OCI-LY7 (cell line): ENCODE measurements at regions of chr3 and their contacts with region 1.

Region 1: GRCh38 chr3:46953234-46954010 is 23.1 kb downstream of the CCDC12 start:
- DNase-seq: peak; percentile 62
- H3K4me3 ChIP-seq: peak overlapping the region; percentile 49
- H3K27ac ChIP-seq: peak overlapping the region; percentile 77
- H3K4me1 ChIP-seq: peaks cover 97% of the 10 kb centered on the region
- CTCF ChIP-seq: no peak

Region 2: DNA sequence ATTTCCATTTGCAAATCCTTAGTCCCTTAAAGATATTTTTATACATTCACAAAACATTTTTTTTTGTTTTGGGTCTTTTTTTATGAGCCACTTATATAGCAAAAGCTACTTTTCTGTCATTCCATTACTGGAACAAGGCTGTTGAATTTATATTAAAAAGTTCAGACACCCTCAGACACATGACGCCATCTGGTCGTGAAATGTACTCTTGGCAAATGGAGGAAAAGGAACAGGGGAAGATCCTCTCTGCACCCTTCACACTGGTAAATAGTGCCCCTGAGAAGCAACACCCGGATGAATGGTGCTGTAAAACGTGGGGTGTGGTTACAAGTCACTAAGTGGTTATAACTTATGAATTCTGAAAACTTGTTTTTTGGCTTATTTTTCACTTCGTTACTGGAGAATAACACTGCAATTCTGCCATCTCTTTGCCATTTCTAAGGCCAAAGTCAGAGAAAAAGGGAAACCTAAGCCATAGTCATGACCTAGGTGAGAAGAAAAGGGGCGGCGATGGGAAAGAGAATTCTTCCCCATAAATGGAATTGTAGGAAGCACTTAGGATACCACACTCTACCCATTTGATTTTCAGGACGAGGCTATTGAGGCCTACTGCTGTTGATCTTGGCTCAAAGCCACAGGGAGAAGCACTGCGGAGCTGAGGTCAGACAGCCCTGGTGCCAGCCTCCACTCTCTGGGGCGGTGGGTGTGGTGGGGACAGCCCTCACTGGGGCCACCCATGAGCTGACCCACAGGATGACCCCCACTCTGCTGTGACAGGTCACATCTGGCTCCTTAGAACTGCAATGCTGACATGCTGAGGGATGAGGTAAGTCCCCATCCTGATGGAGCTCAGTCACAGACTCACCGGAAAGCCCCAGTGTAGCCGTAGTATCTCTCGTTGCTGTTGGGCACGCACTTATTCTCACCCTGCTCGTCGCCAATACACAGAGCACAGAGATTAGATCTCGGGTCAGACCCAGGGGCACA is 510.6 kb before region 1 on chr3:
- CTCF ChIA-PET with region 1: no interaction called
- POLR2A ChIA-PET with region 1: no interaction called
- intact Hi-C with region 1: no loop called
- DNase-seq: no peak
- H3K4me3 ChIP-seq: no peak overlapping the region
- H3K27ac ChIP-seq: no peak overlapping the region
- H3K4me1 ChIP-seq: peaks cover 7% of the 10 kb centered on the region
- CTCF ChIP-seq: no peak

Region 3: GRCh38 chr3:46935168-46935858 is 18.1 kb before region 1 on chr3:
- CTCF ChIA-PET with region 1: interaction called, 9 read pairs
- POLR2A ChIA-PET with region 1: interaction called, 13 read pairs
- intact Hi-C with region 1: no loop called
- DNase-seq: no peak
- H3K4me3 ChIP-seq: no peak overlapping the region
- H3K27ac ChIP-seq: no peak overlapping the region
- H3K4me1 ChIP-seq: peaks cover 79% of the 10 kb centered on the region
- CTCF ChIP-seq: no peak

Region 4: DNA sequence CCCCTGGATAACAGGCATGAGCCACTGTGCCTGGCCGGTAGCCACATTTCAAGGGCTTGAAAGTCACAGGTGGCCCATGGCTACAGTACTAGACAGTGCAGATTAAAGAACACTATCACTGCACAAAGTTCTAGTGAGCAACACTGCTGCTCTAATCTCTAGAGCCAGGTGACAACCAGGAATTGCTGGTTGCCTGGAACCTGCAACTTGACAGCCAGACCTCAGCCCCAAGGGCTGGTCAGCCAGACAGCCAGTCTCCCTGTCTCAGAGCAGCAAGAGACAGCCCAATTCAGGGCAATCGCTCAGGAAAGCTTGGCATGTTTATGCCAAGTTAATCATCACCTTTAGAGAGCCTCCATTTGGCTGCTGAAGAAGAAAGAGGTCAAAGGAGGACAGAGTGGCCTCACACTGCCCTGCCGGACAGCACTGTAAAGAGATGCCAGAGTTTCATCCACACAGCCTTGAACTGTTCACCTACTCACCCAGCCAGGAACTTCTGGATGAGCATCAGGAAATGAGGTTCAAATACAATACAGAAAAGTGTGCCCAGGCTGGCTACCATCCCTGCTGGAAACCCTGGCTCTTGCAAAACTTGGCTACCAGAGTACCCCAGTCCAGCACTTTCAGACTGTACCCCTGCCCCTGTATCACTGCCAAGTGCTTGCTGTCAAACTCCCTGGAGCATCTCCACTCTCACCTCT is 17.1 kb after region 1 on chr3:
- CTCF ChIA-PET with region 1: interaction called, 4 read pairs
- POLR2A ChIA-PET with region 1: interaction called, 16 read pairs
- intact Hi-C with region 1: loop called (anchors 1 kb)
- DNase-seq: no peak
- H3K4me3 ChIP-seq: peak overlapping the region; percentile 56
- H3K27ac ChIP-seq: peak overlapping the region; percentile 87
- H3K4me1 ChIP-seq: peaks cover 89% of the 10 kb centered on the region
- CTCF ChIP-seq: no peak

Region 5: DNA sequence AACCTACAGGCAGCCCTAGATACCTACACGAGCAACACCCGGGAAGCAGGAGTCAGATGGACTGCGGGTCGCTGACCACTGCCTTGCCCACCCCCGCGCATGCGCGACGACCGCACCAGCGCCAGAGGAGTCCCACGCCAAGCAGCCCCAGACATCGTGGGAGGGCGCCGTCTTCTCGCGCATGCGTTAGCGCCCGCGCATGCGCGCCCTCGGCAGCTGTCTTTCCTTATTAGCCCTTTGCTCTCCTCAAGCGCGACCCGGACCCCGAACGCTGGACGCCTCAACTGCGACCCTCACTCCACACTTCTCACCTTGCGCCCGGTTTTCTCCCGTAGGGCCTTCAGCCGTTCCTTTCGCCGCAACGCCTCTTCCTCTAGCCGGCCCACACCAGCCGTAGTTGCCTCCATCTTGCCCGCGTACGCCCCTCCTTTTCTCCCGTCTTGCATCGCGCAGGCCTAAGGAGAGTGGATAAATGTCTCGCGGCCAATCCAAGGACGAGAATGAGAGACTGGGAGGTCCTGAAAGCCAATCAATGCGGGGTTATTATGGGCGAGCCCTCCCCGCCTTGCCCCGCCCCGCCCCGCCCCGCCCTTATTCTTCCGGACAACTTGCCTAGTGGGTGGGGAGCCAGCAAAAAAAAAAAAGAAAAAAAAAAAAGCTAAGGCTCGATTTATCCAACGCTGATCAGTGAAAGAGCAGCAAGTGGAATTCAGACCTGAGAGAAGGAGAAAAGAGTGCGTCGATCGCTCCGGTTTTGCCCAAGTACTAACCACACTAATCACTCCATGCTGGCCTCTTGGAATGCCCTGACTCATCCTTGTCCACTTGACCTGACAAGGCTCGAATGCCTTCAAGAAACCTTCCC is 23.1 kb after region 1 on chr3 and contains the start of gene CCDC12:
- CTCF ChIA-PET with region 1: interaction called, 6 read pairs
- POLR2A ChIA-PET with region 1: interaction called, 14 read pairs
- intact Hi-C with region 1: loop called (anchors 1 kb)
- DNase-seq: peak; percentile 98
- H3K4me3 ChIP-seq: peak within 1 kb of the TSS; percentile 74
- H3K27ac ChIP-seq: peak within 1 kb of the TSS; percentile 82
- H3K4me1 ChIP-seq: peaks cover 70% of the 10 kb centered on the region
- CTCF ChIP-seq: no peak
- total RNA-seq, gene CCDC12: 74.9 and 102 TPM in 2 replicates